GM12878 (cell line): ENCODE measurements at regions of chr22 and their contacts with region 1.

Region 1: GRCh38 chr22:23849009-23850006 is 8.4 kb upstream of the SLC2A11 start:
- DNase-seq: no peak
- ATAC-seq: peak; percentile 87
- H3K4me3 ChIP-seq: peak overlapping the region; percentile 60; the same call in 1 of the 2 replicates
- H3K27ac ChIP-seq: no peak overlapping the region
- H3K4me1 ChIP-seq: peaks cover 60% of the 10 kb centered on the region
- H3K27me3 ChIP-seq: no peaks in the 10 kb centered on the region
- CTCF ChIP-seq: peak; percentile 94 to 98 (median 97); a peak in 5 of 6 replicates
- EP300 ChIP-seq: no peak
- POLR2A ChIP-seq: no peak
- RAD21 ChIP-seq: peak; percentile 99

Region 2: DNA sequence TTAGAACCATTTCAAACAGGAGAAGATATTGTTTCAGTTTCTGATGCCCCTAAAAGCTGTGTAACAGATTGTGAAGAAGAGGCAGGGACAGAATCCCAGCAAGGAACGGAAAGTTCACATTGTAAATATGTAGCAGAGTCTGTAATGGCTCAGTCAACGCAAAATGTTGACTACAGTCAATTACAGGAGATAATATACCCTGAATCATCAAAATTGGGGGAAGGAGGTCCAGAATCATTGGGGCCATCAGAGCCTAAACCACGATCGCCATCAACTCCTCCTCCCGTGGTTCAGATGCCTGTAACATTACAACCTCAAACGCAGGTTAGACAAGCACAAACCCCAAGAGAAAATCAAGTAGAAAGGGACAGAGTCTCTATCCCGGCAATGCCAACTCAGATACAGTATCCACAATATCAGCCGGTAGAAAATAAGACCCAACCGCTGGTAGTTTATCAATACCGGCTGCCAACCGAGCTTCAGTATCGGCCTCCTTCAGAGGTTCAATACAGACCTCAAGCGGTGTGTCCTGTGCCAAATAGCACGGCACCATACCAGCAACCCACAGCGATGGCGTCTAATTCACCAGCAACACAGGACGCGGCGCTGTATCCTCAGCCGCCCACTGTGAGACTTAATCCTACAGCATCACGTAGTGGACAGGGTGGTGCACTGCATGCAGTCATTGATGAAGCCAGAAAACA is 310.0 kb before region 1 on chr22:
- CTCF ChIA-PET with region 1: interaction called, 3 read pairs
- POLR2A ChIA-PET with region 1: no interaction called
- RAD21 ChIA-PET with region 1: interaction called, 5 read pairs
- SMC1A ChIA-PET with region 1: interaction called, 5 read pairs
- in situ Hi-C with region 1: no loop called
- intact Hi-C with region 1: loop called (anchors 2 kb)
- DNase-seq: peak; percentile 36
- ATAC-seq: peak; percentile 100
- H3K4me3 ChIP-seq: no peak overlapping the region
- H3K27ac ChIP-seq: no peak overlapping the region
- H3K4me1 ChIP-seq: no peaks in the 10 kb centered on the region
- H3K27me3 ChIP-seq: peaks cover 0 to 2% of the 10 kb centered on the region in 2 experiments; a peak in 2 of 4 replicates
- CTCF ChIP-seq: peak; percentile 78 to 90 (median 85)
- EP300 ChIP-seq: no peak
- POLR2A ChIP-seq: no peak
- RAD21 ChIP-seq: peak; percentile 86

Region 3: DNA sequence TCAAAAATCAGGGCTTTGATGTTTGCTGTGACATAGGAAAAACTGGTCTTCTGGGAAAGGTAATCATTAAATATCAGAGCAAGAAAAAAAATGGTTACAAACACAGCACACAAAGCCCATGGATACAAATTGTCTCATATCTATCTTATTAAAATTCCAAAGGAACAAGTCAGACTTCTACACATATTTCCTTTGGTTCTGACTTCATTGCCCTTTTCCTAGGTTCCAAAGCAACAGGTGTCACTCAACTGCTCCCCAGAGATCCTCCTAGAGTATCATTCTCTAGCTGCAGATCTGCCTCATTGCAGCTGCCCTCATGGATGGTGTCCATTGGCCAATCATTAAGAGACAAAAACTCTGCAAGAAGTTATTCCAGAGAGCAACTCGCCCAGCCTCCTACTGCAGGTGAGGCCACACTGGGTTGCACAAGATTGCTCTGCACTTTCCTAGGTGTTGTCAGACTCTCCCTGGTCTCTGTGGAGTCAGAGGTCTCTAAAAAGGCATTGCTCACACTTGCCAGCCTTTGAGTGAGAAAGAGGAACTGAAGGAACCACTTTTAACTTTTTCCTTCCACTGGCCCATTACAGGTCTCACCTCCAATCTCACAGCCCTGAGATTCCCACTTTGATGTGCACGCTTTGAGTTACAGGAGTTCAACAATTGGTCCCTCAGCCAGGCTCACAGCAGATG is 222.9 kb before region 1 on chr22:
- CTCF ChIA-PET with region 1: interaction called, 7 read pairs
- POLR2A ChIA-PET with region 1: no interaction called
- RAD21 ChIA-PET with region 1: no interaction called
- SMC1A ChIA-PET with region 1: no interaction called
- in situ Hi-C with region 1: loop called (anchors 5 kb)
- intact Hi-C with region 1: loop called (anchors 5 kb)
- DNase-seq: no peak
- ATAC-seq: no peak; the same call in 2 of the 3 replicates
- H3K4me3 ChIP-seq: no peak overlapping the region
- H3K27ac ChIP-seq: no peak overlapping the region
- H3K4me1 ChIP-seq: no peaks in the 10 kb centered on the region
- H3K27me3 ChIP-seq: no peaks in the 10 kb centered on the region; a peak in 1 of 4 replicates
- CTCF ChIP-seq: no peak
- EP300 ChIP-seq: no peak
- POLR2A ChIP-seq: no peak
- RAD21 ChIP-seq: no peak

Region 4: GRCh38 chr22:23767673-23768548 is 81.4 kb before region 1 on chr22 and contains the start of gene CHCHD10:
- CTCF ChIA-PET with region 1: interaction called, 197 read pairs
- POLR2A ChIA-PET with region 1: interaction called, 18 read pairs
- RAD21 ChIA-PET with region 1: interaction called, 38 read pairs
- SMC1A ChIA-PET with region 1: interaction called, 40 read pairs
- in situ Hi-C with region 1: no loop called
- intact Hi-C with region 1: loop called (anchors 1 kb)
- DNase-seq: no peak
- ATAC-seq: peak; percentile 76
- H3K4me3 ChIP-seq: peak within 1 kb of the TSS; percentile 74
- H3K27ac ChIP-seq: peak within 1 kb of the TSS; percentile 83
- H3K4me1 ChIP-seq: peaks cover 33% of the 10 kb centered on the region
- H3K27me3 ChIP-seq: no peaks in the 10 kb centered on the region
- CTCF ChIP-seq: peak; percentile 59 to 80 (median 75)
- EP300 ChIP-seq: no peak
- POLR2A ChIP-seq: peak; percentile 89
- RAD21 ChIP-seq: peak; percentile 53
- polyA plus RNA-seq, gene CHCHD10: 13.2 to 216 TPM

Region 5: GRCh38 chr22:23800297-23801237 is 48.7 kb before region 1 on chr22:
- CTCF ChIA-PET with region 1: interaction called, 5 read pairs
- POLR2A ChIA-PET with region 1: interaction called, 12 read pairs
- RAD21 ChIA-PET with region 1: interaction called, 11 read pairs
- SMC1A ChIA-PET with region 1: interaction called, 10 read pairs
- in situ Hi-C with region 1: no loop called
- intact Hi-C with region 1: no loop called
- DNase-seq: peak; percentile 87
- ATAC-seq: peak; percentile 70
- H3K4me3 ChIP-seq: no peak overlapping the region
- H3K27ac ChIP-seq: peak overlapping the region; percentile 89
- H3K4me1 ChIP-seq: peaks cover 76% of the 10 kb centered on the region
- H3K27me3 ChIP-seq: no peaks in the 10 kb centered on the region
- CTCF ChIP-seq: no peak
- EP300 ChIP-seq: peak in 1 of 2 experiments; percentile 74; a peak in 2 of 4 replicates
- POLR2A ChIP-seq: no peak
- RAD21 ChIP-seq: no peak

Region 6: GRCh38 chr22:23939017-23939357 is 89.7 kb after region 1 on chr22:
- CTCF ChIA-PET with region 1: no interaction called
- POLR2A ChIA-PET with region 1: no interaction called
- RAD21 ChIA-PET with region 1: no interaction called
- SMC1A ChIA-PET with region 1: no interaction called
- in situ Hi-C with region 1: no loop called
- intact Hi-C with region 1: no loop called
- DNase-seq: no peak
- ATAC-seq: no peak
- H3K4me3 ChIP-seq: no peak overlapping the region
- H3K27ac ChIP-seq: no peak overlapping the region
- H3K4me1 ChIP-seq: no peaks in the 10 kb centered on the region
- H3K27me3 ChIP-seq: no peaks in the 10 kb centered on the region
- CTCF ChIP-seq: no peak
- EP300 ChIP-seq: no peak
- POLR2A ChIP-seq: no peak
- RAD21 ChIP-seq: no peak